Prostate gland (tissue), 2 donors: ENCODE measurements at regions of chr3 and their contacts with region 1.

Region 1: GRCh38 chr3:118884748-118885206 is 149.9 kb downstream of the IGSF11 start:
- DNase-seq: peak; percentile 56
- H3K4me3 ChIP-seq: no peak overlapping the region
- H3K27ac ChIP-seq: no peak overlapping the region
- H3K4me1 ChIP-seq: no peaks in the 10 kb centered on the region
- H3K27me3 ChIP-seq: no peaks in the 10 kb centered on the region
- CTCF ChIP-seq: peak in 3 of 4 experiments; percentile 61 to 79 (median 65)
- POLR2A ChIP-seq: no peak

Region 2: DNA sequence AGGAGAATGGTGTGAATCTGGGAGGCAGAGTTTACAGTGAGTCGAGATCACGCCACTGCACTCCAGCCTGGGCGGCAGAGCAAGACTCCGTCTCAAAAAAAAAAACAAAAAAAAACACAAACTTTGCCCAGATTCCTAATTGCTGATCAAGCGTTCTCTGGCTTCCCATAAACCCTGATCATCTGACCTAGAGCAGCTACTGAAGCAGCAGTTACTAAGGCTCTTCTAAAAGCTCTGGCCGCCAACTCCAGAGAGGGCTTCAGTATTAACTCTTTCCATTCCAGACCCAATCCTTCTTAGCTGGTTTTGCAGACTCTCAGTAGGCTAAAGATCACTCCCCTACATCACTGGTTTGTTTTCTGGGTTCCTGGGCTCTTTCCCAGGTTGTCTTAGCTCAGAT is 51.7 kb before region 1 on chr3:
- intact Hi-C with region 1: no loop called
- DNase-seq: no peak
- H3K4me3 ChIP-seq: no peak overlapping the region
- H3K27ac ChIP-seq: no peak overlapping the region
- H3K4me1 ChIP-seq: no peaks in the 10 kb centered on the region
- H3K27me3 ChIP-seq: no peaks in the 10 kb centered on the region
- CTCF ChIP-seq: no peak
- POLR2A ChIP-seq: no peak

Region 3: DNA sequence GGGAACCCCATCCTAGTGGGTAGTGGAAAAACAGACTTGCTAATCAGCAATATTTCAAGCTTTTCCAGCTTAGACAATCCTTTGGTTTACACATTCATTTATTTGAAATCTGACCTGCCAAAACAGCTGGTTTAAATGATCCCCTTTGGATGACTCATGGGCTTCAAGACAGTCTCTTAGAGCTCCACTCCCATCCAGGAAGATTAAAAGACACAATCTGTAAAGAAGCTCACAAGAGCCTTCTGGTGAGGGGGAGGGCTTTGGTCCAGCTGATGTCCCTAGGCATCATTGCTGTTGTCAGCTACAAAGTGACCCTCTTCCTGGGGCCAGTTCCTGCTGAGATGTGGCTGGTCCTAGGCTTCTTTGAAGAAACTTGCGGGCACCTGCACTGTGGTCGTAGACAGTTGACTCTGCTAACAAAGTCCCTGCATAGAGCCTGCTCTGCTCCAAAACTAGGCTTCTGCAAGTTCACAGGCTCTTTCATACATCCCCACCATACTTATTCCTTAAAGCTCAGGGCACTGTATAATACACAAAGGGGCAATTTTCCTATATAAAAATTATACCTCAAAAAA is 76.2 kb after region 1 on chr3:
- intact Hi-C with region 1: no loop called
- DNase-seq: no peak
- H3K4me3 ChIP-seq: no peak overlapping the region
- H3K27ac ChIP-seq: no peak overlapping the region
- H3K4me1 ChIP-seq: no peaks in the 10 kb centered on the region
- H3K27me3 ChIP-seq: peaks cover 3% of the 10 kb centered on the region
- CTCF ChIP-seq: no peak
- POLR2A ChIP-seq: no peak

Region 4: DNA sequence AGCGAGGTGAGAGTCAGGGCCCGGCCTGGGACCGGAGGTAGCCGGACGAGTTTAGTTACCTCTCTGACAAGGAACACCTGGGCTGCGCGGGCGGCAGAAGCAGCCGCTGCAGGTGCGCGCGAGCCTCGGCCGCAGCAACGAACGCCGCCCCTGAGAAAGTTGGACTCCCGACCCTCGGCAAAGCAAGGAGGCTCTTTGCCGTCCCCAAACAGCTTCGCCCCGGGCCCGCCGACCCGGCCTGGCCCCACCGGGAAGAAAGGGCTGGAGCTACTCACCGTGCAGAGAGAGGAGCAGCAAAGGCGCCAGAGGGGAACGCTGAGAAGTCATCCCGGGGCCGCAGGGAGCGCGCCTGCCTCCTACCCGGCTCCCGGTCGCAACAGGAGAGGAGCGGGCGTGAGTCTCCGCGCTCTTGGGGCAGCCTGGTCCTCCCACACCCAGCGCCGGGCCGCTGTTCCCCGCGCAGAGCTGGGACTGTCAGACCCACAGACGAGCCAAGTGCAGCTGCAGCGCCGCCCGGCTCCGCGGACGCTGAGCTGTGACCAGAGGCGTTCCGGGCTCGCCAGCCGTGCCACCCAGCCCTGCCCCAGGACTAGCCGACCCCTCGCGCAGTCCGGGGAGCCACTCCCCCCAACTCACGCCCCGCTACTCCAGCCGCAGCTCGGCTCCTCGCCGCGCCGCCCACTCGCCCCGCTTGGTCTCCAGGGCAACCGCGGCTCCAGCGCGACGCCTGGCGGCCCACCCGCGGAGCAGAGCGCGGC is 149.7 kb after region 1 on chr3 and contains the start of gene IGSF11:
- intact Hi-C with region 1: loop called (anchors 10 kb)
- DNase-seq: peak; percentile 43
- H3K4me3 ChIP-seq: peak within 1 kb of the TSS; percentile 43 to 53
- H3K27ac ChIP-seq: peak within 1 kb of the TSS in 1 of 2 donors; percentile 31
- H3K4me1 ChIP-seq: peaks cover 2% of the 10 kb centered on the region
- H3K27me3 ChIP-seq: peaks cover under 1% of the 10 kb centered on the region
- CTCF ChIP-seq: peak in 3 of 4 experiments; percentile 39 to 58 (median 52)
- POLR2A ChIP-seq: no peak
- total RNA-seq, gene IGSF11: 0.46 to 30.9 TPM

Region 5: GRCh38 chr3:119098619-119099222 is 213.9 kb after region 1 on chr3:
- intact Hi-C with region 1: loop called (anchors 5 kb)
- DNase-seq: no peak
- H3K4me3 ChIP-seq: no peak overlapping the region
- H3K27ac ChIP-seq: no peak overlapping the region
- H3K4me1 ChIP-seq: no peaks in the 10 kb centered on the region
- H3K27me3 ChIP-seq: no peaks in the 10 kb centered on the region
- CTCF ChIP-seq: peak in 3 of 4 experiments; percentile 51 to 71 (median 62)
- POLR2A ChIP-seq: no peak